HEK293 (cell line): ENCODE measurements at regions of chr11 and their contacts with region 1.

Region 1: GRCh38 chr11:17384002-17384511 is 4.4 kb downstream of the KCNJ11 start:
- H3K4me3 ChIP-seq: no peak overlapping the region
- H3K27ac ChIP-seq: no peak overlapping the region
- H3K4me1 ChIP-seq: no peaks in the 10 kb centered on the region
- CTCF ChIP-seq: peak; percentile 79

Region 2: GRCh38 chr11:16448123-16448717 is 935.8 kb before region 1 on chr11:
- CTCF ChIA-PET with region 1: no interaction called
- POLR2A ChIA-PET with region 1: no interaction called
- H3K4me3 ChIP-seq: no peak overlapping the region
- H3K27ac ChIP-seq: no peak overlapping the region
- H3K4me1 ChIP-seq: no peaks in the 10 kb centered on the region
- CTCF ChIP-seq: no peak

Region 3: GRCh38 chr11:17354601-17354991 is 29.5 kb before region 1 on chr11:
- CTCF ChIA-PET with region 1: interaction called, 32 read pairs
- POLR2A ChIA-PET with region 1: interaction called, 4 read pairs
- H3K4me3 ChIP-seq: no peak overlapping the region
- H3K27ac ChIP-seq: no peak overlapping the region
- H3K4me1 ChIP-seq: no peaks in the 10 kb centered on the region
- CTCF ChIP-seq: peak; percentile 29; the same call in 1 of the 2 replicates

Region 4: GRCh38 chr11:17371614-17372013 is 12.4 kb before region 1 on chr11:
- CTCF ChIA-PET with region 1: interaction called, 41 read pairs
- POLR2A ChIA-PET with region 1: interaction called, 3 read pairs
- H3K4me3 ChIP-seq: no peak overlapping the region
- H3K27ac ChIP-seq: no peak overlapping the region
- H3K4me1 ChIP-seq: no peaks in the 10 kb centered on the region
- CTCF ChIP-seq: no peak

Region 5: GRCh38 chr11:17498475-17498874 is 114.4 kb after region 1 on chr11:
- CTCF ChIA-PET with region 1: interaction called, 318 read pairs
- POLR2A ChIA-PET with region 1: interaction called, 3 read pairs
- H3K4me3 ChIP-seq: no peak overlapping the region
- H3K27ac ChIP-seq: no peak overlapping the region
- H3K4me1 ChIP-seq: no peaks in the 10 kb centered on the region
- CTCF ChIP-seq: no peak

Region 6: GRCh38 chr11:17743808-17744119 is 359.7 kb after region 1 on chr11:
- CTCF ChIA-PET with region 1: no interaction called
- POLR2A ChIA-PET with region 1: no interaction called
- H3K4me3 ChIP-seq: no peak overlapping the region
- H3K27ac ChIP-seq: no peak overlapping the region
- H3K4me1 ChIP-seq: no peaks in the 10 kb centered on the region
- CTCF ChIP-seq: no peak